GM10248 (cell line): ENCODE measurements at regions of chr1 and their contacts with region 1.

Region 1: DNA sequence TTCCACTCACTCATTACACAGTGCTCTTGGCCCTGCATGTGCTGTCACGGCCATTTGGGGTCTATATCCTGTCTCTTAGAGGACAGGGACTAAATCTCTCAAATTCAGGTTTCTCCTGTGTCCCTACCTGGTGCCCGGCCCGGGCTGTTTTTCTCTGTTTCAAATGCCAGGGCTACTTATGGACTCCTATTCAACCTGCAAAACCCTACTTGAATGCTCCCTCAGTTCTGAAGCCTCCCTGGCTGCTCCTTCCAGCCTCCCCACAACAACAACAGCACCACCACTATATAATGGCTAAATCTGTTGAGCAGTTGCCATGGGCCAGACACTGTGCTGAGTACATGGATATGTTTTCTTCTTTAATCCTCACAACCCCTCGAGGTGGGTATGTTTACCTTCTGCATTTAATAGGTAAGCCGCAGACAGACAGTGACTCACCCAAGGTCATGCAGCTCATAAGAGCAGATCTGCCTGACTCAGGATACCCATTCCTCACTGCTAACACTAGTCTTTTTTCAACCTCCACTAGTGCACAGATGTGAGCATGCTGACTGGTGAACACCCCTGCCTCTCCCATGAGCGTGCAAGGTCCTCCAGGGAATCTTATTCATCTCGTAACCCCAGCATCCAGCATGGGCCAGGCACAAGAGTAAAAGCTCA is 29.9 kb downstream of the DHRS3 start:
- DNase-seq: no peak
- CTCF ChIP-seq: no peak

Region 2: GRCh38 chr1:12577020-12577419 is 11.1 kb before region 1 on chr1:
- CTCF ChIA-PET with region 1: interaction called, 11 read pairs
- POLR2A ChIA-PET with region 1: no interaction called
- DNase-seq: no peak
- CTCF ChIP-seq: no peak

Region 3: GRCh38 chr1:12669529-12670068 is 81.5 kb after region 1 on chr1:
- CTCF ChIA-PET with region 1: no interaction called
- POLR2A ChIA-PET with region 1: no interaction called
- DNase-seq: no peak
- CTCF ChIP-seq: no peak